Activated CD4-positive, alpha-beta memory T cell treated with anti-CD3 and anti-CD28 coated beads, Interleukin-2, amount 10 ng/mL, durations not matched to agents 7 days and 5 days (primary cell): ENCODE measurements at regions of chr5 and their contacts with region 1.

Region 1: GRCh38 chr5:135324897-135325650 is 74.0 kb downstream of the MACROH2A1 start:
- DNase-seq: peak; percentile 48
- H3K4me3 Mint-ChIP-seq: no peak overlapping the region
- H3K27ac Mint-ChIP-seq: peak overlapping the region; percentile 60
- H3K4me1 Mint-ChIP-seq: peaks cover 14% of the 10 kb centered on the region
- H3K27me3 Mint-ChIP-seq: no peaks in the 10 kb centered on the region

Region 2: GRCh38 chr5:135296904-135297816 is 27.9 kb before region 1 on chr5:
- CTCF ChIA-PET with region 1: no interaction called
- POLR2A ChIA-PET with region 1: no interaction called
- DNase-seq: no peak
- H3K4me3 Mint-ChIP-seq: no peak overlapping the region
- H3K27ac Mint-ChIP-seq: no peak overlapping the region
- H3K4me1 Mint-ChIP-seq: peaks cover 3% of the 10 kb centered on the region
- H3K27me3 Mint-ChIP-seq: peaks cover 60% of the 10 kb centered on the region

Region 3: DNA sequence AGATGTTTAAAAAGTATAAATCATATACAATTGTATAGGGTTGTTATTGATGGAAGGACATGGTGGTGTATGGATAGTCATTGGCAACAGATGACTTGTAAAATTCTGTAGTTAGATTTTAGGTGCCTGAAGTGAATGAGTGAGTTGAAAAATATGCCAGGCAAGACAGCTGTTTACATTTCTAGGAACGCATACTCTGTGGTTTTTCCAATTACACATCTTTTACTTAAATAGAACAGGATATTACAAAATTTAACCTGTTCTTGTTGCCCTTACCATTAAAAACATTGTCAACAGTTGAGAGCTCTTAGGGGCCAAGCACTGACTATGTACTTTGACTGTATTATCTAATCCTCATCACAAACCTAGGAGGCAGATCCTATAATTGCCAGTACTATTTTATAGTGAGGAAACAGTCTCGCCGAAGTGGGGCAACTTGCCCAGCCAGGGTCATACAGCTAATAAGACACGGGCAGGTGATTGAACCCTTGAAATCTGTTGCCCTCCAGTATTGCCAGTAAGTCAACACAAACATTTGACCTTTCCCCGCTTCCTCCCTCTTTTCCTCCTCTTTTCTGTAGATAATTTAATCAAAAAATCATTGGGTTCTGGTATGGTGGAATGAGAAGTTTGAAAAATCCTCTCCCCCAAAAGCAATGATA is 14.6 kb before region 1 on chr5:
- CTCF ChIA-PET with region 1: interaction called, 8 read pairs
- POLR2A ChIA-PET with region 1: interaction called, 29 read pairs
- DNase-seq: no peak
- H3K4me3 Mint-ChIP-seq: no peak overlapping the region
- H3K27ac Mint-ChIP-seq: peak overlapping the region; percentile 83
- H3K4me1 Mint-ChIP-seq: peaks cover 70% of the 10 kb centered on the region
- H3K27me3 Mint-ChIP-seq: no peaks in the 10 kb centered on the region

Region 4: DNA sequence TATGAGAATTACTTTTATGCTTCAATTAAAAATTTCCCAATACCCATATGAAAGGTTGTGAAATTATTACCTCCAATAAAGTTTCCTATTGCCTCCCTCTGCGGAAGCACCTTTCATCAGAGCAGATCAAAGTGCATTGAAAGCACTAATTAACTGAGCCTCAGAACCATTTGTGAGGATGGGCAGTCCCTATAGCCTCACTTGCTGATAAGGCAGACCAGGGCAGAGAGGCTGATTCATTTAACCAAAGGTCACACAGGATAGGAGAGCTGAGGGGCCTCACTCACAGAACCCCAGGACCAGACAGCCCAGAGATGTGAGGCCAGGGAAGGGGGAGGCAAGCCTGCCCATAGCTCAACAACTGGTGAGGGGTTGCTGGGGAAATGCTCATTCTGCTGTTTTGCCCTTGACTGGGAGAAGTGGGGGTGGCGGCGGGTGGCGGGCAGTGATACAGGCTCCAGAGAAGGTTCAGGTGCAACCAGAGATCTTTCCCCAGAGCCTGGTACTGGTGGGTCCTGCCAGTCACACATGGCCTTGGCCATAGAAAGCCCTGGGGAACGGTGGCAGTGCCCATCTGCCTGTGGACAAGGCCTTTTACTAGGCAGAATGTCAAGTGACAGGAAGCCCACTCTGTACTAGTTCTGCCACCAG is 16.1 kb after region 1 on chr5:
- CTCF ChIA-PET with region 1: no interaction called
- POLR2A ChIA-PET with region 1: interaction called, 10 read pairs
- DNase-seq: no peak
- H3K4me3 Mint-ChIP-seq: no peak overlapping the region
- H3K27ac Mint-ChIP-seq: no peak overlapping the region
- H3K4me1 Mint-ChIP-seq: no peaks in the 10 kb centered on the region
- H3K27me3 Mint-ChIP-seq: no peaks in the 10 kb centered on the region